WTC11 (cell line): ENCODE measurements at regions of chr5 and their contacts with region 1.

Region 1: GRCh38 chr5:141636413-141637122 is at the starts of genes HDAC3 and RELL2:
- DNase-seq: peak; percentile 97
- ATAC-seq: peak; percentile 82
- H3K4me3 Mint-ChIP-seq: peak within 1 kb of the TSS; percentile 90
- H3K27ac Mint-ChIP-seq: peak within 1 kb of the TSS; percentile 90
- H3K4me1 Mint-ChIP-seq: peaks cover 22% of the 10 kb centered on the region
- H3K27me3 Mint-ChIP-seq: no peaks in the 10 kb centered on the region
- CTCF ChIP-seq: no peak
- total RNA-seq, gene HDAC3: 84.7 to 96.2 TPM (median 94.5 TPM) in 3 replicates
- total RNA-seq, gene RELL2: 19.3 to 23.8 TPM (median 21.4 TPM) in 3 replicates

Region 2: GRCh38 chr5:141650851-141651727 is 14.5 kb after region 1 on chr5 and contains the start of gene FCHSD1:
- CTCF ChIA-PET with region 1: interaction called, 32 read pairs
- POLR2A ChIA-PET with region 1: interaction called, 19 read pairs
- DNase-seq: peak; percentile 94
- ATAC-seq: peak; percentile 95
- H3K4me3 Mint-ChIP-seq: peak within 1 kb of the TSS; percentile 99
- H3K27ac Mint-ChIP-seq: peak within 1 kb of the TSS; percentile 96
- H3K4me1 Mint-ChIP-seq: peaks cover 20% of the 10 kb centered on the region
- H3K27me3 Mint-ChIP-seq: no peaks in the 10 kb centered on the region
- CTCF ChIP-seq: no peak
- total RNA-seq, gene FCHSD1: 43.6 to 50.3 TPM (median 44.8 TPM) in 3 replicates

Region 3: GRCh38 chr5:141664732-141665461 is 28.3 kb after region 1 on chr5:
- CTCF ChIA-PET with region 1: interaction called, 14 read pairs
- POLR2A ChIA-PET with region 1: no interaction called
- DNase-seq: peak; percentile 88
- ATAC-seq: peak; percentile 95
- H3K4me3 Mint-ChIP-seq: no peak overlapping the region
- H3K27ac Mint-ChIP-seq: no peak overlapping the region
- H3K4me1 Mint-ChIP-seq: peaks cover 11% of the 10 kb centered on the region
- H3K27me3 Mint-ChIP-seq: no peaks in the 10 kb centered on the region
- CTCF ChIP-seq: peak; percentile 92

Region 4: DNA sequence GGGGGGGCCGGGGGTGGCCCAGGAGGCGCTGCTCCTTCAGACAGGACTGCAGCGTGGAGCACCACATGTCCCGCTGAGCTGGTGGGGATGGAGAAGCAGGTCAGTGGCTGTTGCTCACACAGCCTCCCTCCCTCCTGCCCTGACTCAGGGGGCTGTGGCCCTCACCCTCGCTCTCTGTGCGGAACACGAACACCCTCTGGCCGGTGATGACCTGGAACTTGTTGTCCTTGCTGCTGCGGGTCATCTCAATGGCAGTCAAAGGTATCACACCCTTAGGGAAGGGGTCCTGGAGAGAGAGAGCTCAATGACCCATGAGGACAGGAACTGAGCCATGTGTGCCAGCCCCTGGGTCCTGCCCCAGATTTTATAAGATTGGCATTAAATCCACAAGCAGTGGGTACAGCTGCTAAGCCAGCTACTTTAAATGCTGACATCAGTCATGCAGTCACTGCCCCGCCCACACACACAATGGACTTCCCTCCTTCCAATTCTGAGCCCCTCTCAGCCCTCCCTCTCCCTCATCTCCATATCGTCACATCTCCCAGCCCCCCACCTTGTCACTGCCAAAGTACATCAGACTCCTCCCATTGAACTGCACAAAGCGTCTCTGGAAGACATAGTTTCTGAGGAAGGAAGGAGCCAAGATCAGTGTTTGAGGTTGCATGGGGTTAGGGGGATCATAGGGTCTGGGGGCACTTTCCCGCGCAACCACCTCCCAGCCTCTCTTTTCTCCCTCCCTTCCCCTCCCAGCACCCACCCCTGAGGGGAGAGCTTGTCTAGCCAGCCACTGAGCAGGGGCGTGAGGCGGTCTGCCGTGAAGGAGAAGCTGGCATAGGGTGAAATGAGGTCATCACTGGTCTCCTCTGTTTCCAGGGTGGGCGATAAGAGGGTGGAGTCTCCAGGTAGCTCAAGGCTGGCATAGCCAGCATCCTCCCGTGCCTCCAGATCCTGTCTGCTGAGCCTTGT is 36.6 kb after region 1 on chr5:
- CTCF ChIA-PET with region 1: interaction called, 10 read pairs
- POLR2A ChIA-PET with region 1: no interaction called
- DNase-seq: no peak
- ATAC-seq: peak; percentile 2; the same call in 1 of the 2 replicates
- H3K4me3 Mint-ChIP-seq: no peak overlapping the region
- H3K27ac Mint-ChIP-seq: peak overlapping the region; percentile 42
- H3K4me1 Mint-ChIP-seq: peaks cover 32% of the 10 kb centered on the region
- H3K27me3 Mint-ChIP-seq: no peaks in the 10 kb centered on the region
- CTCF ChIP-seq: no peak

Region 5: GRCh38 chr5:141681695-141682641 is 45.4 kb after region 1 on chr5 and contains the start of gene ARAP3:
- CTCF ChIA-PET with region 1: interaction called, 12 read pairs
- POLR2A ChIA-PET with region 1: interaction called, 5 read pairs
- DNase-seq: peak; percentile 76
- ATAC-seq: peak; percentile 50
- H3K4me3 Mint-ChIP-seq: peak within 1 kb of the TSS; percentile 84
- H3K27ac Mint-ChIP-seq: peak within 1 kb of the TSS; percentile 96
- H3K4me1 Mint-ChIP-seq: peaks cover 50% of the 10 kb centered on the region
- H3K27me3 Mint-ChIP-seq: no peaks in the 10 kb centered on the region
- CTCF ChIP-seq: no peak
- total RNA-seq, gene ARAP3: 51.2 to 60.4 TPM (median 53.4 TPM) in 3 replicates